Endothelial cell of umbilical vein (primary cell): ENCODE measurements at regions of chr1 and their contacts with region 1.

Region 1: DNA sequence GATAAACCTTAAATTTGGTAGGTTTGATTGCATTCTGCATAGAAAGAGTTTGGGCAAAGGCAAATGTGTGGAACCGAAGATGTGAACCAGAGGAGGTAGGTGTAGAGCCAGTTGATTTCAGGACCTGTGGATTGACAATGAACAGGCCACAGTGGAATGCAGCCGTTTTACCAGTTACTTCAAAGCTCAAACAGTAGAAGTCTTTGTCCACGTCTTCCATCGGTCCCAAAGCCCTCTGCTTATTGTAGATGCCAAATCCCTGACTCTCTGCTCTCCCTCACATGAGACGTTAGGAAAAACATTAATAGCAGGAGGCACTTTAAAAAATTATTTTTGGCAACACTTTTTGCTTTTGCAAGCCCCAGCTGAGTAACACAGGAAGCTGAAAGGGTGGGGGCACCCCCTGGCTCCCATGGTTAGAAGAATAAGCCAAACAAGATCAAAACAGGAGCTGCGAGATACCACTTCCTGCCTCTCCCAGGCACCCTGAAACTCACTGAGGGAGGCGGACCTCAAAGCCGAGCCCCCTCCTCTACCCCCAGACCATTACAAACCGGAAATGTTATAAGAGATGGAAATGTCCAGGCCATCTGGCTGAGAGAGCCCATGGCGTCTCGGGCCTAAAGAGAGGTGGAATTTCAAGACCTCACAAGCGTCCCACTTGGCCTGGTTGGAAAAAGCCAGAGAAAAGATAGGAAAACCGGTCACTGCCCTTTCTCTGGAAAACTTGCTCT is 13.5 kb downstream of the TRAF3IP3 start:
- DNase-seq: peak; percentile 94
- H3K4me3 ChIP-seq: no peak overlapping the region
- H3K27ac ChIP-seq: peak overlapping the region; percentile 80
- H3K4me1 ChIP-seq: peaks cover 18% of the 10 kb centered on the region
- H3K27me3 ChIP-seq: no peaks in the 10 kb centered on the region
- CTCF ChIP-seq: no peak
- POLR2A ChIP-seq: no peak

Region 2: GRCh38 chr1:209784265-209785169 is 15.2 kb after region 1 on chr1 and contains the start of gene C1orf74:
- CTCF ChIA-PET with region 1: interaction called, 8 read pairs
- POLR2A ChIA-PET with region 1: interaction called, 4 read pairs
- dilution Hi-C with region 1: no loop called
- intact Hi-C with region 1: loop called (anchors 1 kb)
- DNase-seq: peak; percentile 99
- H3K4me3 ChIP-seq: peak within 1 kb of the TSS; percentile 62 to 90 (median 75)
- H3K27ac ChIP-seq: peak within 1 kb of the TSS; percentile 74
- H3K4me1 ChIP-seq: peaks cover 10% of the 10 kb centered on the region
- H3K27me3 ChIP-seq: no peaks in the 10 kb centered on the region
- CTCF ChIP-seq: no peak
- POLR2A ChIP-seq: peak; percentile 97
- total RNA-seq, gene C1orf74: 2.3 and 3.0 TPM in 2 replicates

Region 3: GRCh38 chr1:209797978-209798639 is 28.8 kb after region 1 on chr1:
- CTCF ChIA-PET with region 1: interaction called, 3 read pairs
- POLR2A ChIA-PET with region 1: no interaction called
- dilution Hi-C with region 1: no loop called
- intact Hi-C with region 1: loop called (anchors 2 kb)
- DNase-seq: no peak
- H3K4me3 ChIP-seq: no peak overlapping the region
- H3K27ac ChIP-seq: no peak overlapping the region
- H3K4me1 ChIP-seq: peaks cover 24% of the 10 kb centered on the region
- H3K27me3 ChIP-seq: no peaks in the 10 kb centered on the region
- CTCF ChIP-seq: peak in 1 of 2 donors; percentile 20
- POLR2A ChIP-seq: no peak

Region 4: GRCh38 chr1:209805875-209806760 is 36.8 kb after region 1 on chr1 and contains the start of gene IRF6:
- CTCF ChIA-PET with region 1: interaction called, 3 read pairs
- POLR2A ChIA-PET with region 1: no interaction called
- dilution Hi-C with region 1: no loop called
- intact Hi-C with region 1: loop called (anchors 1 kb)
- DNase-seq: peak; percentile 87
- H3K4me3 ChIP-seq: peak within 1 kb of the TSS in 2 of 3 experiments; percentile 51 to 81
- H3K27ac ChIP-seq: peak within 1 kb of the TSS; percentile 47
- H3K4me1 ChIP-seq: peaks cover 38% of the 10 kb centered on the region
- H3K27me3 ChIP-seq: no peaks in the 10 kb centered on the region
- CTCF ChIP-seq: no peak
- POLR2A ChIP-seq: peak; percentile 50
- total RNA-seq, gene IRF6: 22.1 and 42.0 TPM in 2 replicates

Region 5: GRCh38 chr1:209839875-209840491 is 70.6 kb after region 1 on chr1:
- CTCF ChIA-PET with region 1: interaction called, 3 read pairs
- POLR2A ChIA-PET with region 1: no interaction called
- dilution Hi-C with region 1: no loop called
- intact Hi-C with region 1: loop called (anchors 1 kb)
- DNase-seq: peak; percentile 99
- H3K4me3 ChIP-seq: peak overlapping the region in 1 of 3 experiments; percentile 2
- H3K27ac ChIP-seq: peak overlapping the region; percentile 80
- H3K4me1 ChIP-seq: peaks cover 61% of the 10 kb centered on the region
- H3K27me3 ChIP-seq: no peaks in the 10 kb centered on the region
- CTCF ChIP-seq: no peak
- POLR2A ChIP-seq: peak; percentile 10

Region 6: GRCh38 chr1:209884665-209885117 is 115.4 kb after region 1 on chr1:
- CTCF ChIA-PET with region 1: no interaction called
- POLR2A ChIA-PET with region 1: no interaction called
- dilution Hi-C with region 1: no loop called
- intact Hi-C with region 1: loop called (anchors 1 kb)
- DNase-seq: peak; percentile 97
- H3K4me3 ChIP-seq: no peak overlapping the region
- H3K27ac ChIP-seq: peak overlapping the region; percentile 71
- H3K4me1 ChIP-seq: peaks cover 21% of the 10 kb centered on the region
- H3K27me3 ChIP-seq: peaks cover 0 to 7% of the 10 kb centered on the region in 2 experiments
- CTCF ChIP-seq: no peak
- POLR2A ChIP-seq: peak; percentile 40

Region 7: GRCh38 chr1:209924390-209924789 is 155.1 kb after region 1 on chr1:
- CTCF ChIA-PET with region 1: no interaction called
- POLR2A ChIA-PET with region 1: no interaction called
- dilution Hi-C with region 1: no loop called
- intact Hi-C with region 1: no loop called
- DNase-seq: peak; percentile 0
- H3K4me3 ChIP-seq: no peak overlapping the region
- H3K27ac ChIP-seq: no peak overlapping the region
- H3K4me1 ChIP-seq: no peaks in the 10 kb centered on the region
- H3K27me3 ChIP-seq: no peaks in the 10 kb centered on the region
- CTCF ChIP-seq: no peak
- POLR2A ChIP-seq: no peak